ENCODE measurements at regions of chr17 and their contacts with region 1.

Region 1: GRCh38 chr17:51540151-51540550 is 279.8 kb downstream of the UTP18 start:
- DNase-seq: no peak
- H3K4me3 Mint-ChIP-seq: no peak overlapping the region
- H3K27ac Mint-ChIP-seq: no peak overlapping the region
- H3K4me1 Mint-ChIP-seq: no peaks in the 10 kb centered on the region
- H3K27me3 Mint-ChIP-seq: peaks cover 78% of the 10 kb centered on the region
- CTCF ChIP-seq: no peak

Region 2: DNA sequence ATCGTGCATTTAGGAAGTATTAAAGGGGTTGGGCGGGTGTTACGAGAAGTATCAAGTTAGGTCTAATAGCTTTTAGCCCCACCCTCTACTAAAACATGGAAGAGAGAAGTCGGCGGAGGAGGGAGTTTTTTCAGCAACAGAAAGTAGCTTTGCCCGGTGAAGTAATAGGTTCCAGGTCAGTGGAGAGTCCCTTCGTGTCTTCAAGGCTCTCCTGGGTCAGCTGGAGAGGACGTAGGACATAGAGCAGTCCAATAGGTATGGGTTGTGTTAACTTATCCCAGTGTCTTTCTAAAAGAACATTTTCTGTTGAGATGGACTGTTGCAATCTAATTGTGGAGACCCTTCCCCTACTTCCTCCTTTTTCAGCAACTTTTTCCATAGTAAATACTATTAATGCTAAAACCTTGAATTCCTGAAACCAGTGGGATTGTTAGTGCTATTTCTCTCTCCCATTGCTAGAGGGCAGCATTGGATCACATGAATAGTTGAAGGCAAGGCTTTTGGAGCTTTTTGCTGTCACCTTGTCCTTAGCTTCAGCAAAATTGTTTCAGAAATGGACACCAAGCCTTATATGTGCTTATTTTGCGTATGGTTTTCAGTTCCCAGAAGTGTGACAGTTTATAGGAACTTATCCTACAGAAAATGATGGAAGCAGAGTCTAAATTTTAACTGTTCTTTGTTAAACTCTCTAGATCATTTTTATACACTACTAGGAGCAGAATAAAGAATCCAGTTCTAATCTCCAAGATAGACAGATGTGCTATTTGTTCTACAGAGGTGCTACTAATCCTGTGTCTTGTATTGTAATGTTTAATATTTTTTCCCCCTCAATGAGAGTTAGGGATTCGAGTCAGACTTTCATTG is 241.4 kb before region 1 on chr17:
- CTCF ChIA-PET with region 1: interaction called, 11 read pairs
- intact Hi-C with region 1: loop called (anchors 1 kb)
- DNase-seq: peak; percentile 38
- H3K4me3 Mint-ChIP-seq: no peak overlapping the region
- H3K27ac Mint-ChIP-seq: no peak overlapping the region
- H3K4me1 Mint-ChIP-seq: no peaks in the 10 kb centered on the region
- H3K27me3 Mint-ChIP-seq: no peaks in the 10 kb centered on the region
- CTCF ChIP-seq: peak; percentile 68

Region 3: DNA sequence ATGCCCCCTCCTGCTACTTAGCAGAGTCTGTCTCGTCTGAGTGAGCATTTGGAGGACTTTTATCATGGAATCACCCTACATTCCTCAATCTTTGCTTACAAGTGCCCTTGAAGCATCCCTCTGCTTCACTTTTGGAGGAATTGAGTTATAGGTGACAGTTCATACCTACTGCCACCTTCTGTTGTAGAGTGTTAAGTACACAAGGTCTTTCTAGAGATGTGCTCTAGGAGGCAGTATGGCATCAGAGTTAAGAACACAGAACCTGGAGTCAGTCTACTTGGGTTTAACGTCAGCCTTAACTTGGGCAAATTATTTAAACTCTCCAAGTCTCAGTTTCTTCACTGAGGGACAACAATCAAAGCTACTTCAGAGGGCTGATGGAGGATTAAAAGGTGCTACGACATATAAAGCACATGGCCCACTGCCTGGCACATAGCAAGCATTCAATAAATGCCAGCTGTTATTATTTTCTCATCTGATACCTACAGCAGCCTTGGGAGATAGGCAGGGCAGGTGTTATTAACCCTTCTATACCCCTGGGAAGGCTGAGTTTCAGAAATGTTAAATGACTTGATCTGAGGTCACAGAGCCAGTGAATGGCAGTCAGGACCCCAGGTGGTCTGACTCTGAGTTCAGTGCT is 217.6 kb before region 1 on chr17:
- CTCF ChIA-PET with region 1: no interaction called
- intact Hi-C with region 1: loop called (anchors 1 kb)
- DNase-seq: peak; percentile 36
- H3K4me3 Mint-ChIP-seq: no peak overlapping the region
- H3K27ac Mint-ChIP-seq: no peak overlapping the region
- H3K4me1 Mint-ChIP-seq: peaks cover 14% of the 10 kb centered on the region
- H3K27me3 Mint-ChIP-seq: peaks cover 53% of the 10 kb centered on the region
- CTCF ChIP-seq: peak; percentile 73

Region 4: GRCh38 chr17:51371732-51372151 is 168.4 kb before region 1 on chr17:
- CTCF ChIA-PET with region 1: interaction called, 14 read pairs
- intact Hi-C with region 1: loop called (anchors 1 kb)
- DNase-seq: peak; percentile 70
- H3K4me3 Mint-ChIP-seq: peak overlapping the region; percentile 34
- H3K27ac Mint-ChIP-seq: peak overlapping the region; percentile 69
- H3K4me1 Mint-ChIP-seq: peaks cover 9% of the 10 kb centered on the region
- H3K27me3 Mint-ChIP-seq: peaks cover 76% of the 10 kb centered on the region
- CTCF ChIP-seq: peak; percentile 82

Measured in Calu3 (cell line).